ENCODE measurements at regions of chr11 and their contacts with region 1.

Region 1: DNA sequence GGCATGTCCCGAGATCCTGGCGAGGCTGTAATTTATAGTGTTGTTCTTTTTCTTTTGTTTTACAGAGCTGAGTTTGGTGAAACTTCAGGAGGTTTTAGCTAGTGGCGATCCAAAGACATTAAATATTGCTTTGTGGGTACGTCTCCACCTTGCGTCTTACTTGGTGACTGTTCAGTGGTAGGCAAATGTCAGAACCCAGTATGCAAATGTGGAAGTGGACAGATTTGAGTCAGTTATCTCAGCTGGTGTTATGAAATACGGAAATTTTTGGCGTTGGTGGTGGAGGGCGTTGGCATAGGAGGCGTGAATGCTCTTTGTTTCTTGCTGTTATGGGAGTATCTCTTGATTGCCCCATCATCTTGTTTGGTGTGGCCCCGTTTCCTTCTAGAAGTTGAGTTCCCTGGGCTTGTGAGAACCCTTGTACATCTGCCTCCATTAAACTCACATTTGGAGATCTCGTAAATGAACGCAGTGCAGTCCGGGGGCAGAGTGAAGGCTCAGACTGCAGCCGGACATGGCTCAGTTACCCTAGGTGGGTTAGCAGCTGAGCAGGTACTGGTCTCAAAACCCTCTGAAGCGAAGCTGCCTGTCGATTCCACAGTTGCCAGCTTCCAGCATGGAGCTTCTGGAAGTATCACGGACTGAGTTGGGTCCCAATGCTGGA is 39.9 kb downstream of the PTPRJ start:
- DNase-seq: peak; percentile 38
- H3K4me3 Mint-ChIP-seq: peak overlapping the region; percentile 46
- H3K27ac Mint-ChIP-seq: peak overlapping the region; percentile 90
- H3K4me1 Mint-ChIP-seq: peaks cover 79% of the 10 kb centered on the region
- H3K27me3 Mint-ChIP-seq: no peaks in the 10 kb centered on the region

Region 2: DNA sequence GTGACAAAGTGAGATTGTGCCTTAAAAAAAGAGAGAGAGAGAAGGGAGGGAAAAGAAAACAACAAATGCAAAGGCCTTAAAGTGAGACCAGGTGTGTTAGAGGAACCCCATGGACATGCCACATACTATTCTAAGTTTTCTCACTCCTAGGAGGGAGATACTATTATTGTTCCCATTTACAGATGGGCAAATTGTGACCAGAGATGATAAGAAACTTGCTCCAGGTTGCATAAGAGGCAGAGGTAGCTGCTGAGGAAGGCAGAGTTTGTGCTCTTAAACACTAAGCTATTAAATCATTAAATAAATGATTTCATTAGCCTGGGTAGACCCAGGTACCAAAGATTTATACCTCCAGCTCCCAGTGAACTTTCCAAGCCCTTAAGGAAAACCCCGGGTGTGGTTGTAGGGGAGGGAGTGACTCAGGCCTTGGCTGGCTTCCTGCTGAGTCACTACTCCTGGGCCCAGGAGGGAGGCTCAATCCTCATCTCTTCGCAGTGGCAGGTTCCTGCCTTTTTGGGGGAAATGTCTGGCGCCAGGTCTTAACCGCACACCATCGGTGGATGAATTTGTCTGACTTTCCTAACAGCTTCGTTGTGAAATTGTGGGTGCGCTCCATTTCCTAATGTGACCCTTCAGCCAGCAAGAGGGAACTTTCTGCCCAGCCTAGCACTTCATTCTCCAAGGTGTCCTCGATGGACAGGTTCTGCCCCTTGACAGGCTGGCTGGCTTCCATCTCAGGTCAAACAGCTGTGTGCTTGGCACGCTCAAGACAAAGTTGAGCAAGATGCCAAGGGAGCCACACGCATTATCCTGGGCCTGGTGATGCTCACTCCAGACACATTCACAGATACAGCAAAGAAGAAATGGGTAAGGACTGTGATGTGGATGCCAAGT is 73.3 kb before region 1 on chr11:
- intact Hi-C with region 1: no loop called
- DNase-seq: peak; percentile 26
- H3K4me3 Mint-ChIP-seq: no peak overlapping the region
- H3K27ac Mint-ChIP-seq: peak overlapping the region; percentile 74
- H3K4me1 Mint-ChIP-seq: peaks cover 57% of the 10 kb centered on the region
- H3K27me3 Mint-ChIP-seq: no peaks in the 10 kb centered on the region

Region 3: DNA sequence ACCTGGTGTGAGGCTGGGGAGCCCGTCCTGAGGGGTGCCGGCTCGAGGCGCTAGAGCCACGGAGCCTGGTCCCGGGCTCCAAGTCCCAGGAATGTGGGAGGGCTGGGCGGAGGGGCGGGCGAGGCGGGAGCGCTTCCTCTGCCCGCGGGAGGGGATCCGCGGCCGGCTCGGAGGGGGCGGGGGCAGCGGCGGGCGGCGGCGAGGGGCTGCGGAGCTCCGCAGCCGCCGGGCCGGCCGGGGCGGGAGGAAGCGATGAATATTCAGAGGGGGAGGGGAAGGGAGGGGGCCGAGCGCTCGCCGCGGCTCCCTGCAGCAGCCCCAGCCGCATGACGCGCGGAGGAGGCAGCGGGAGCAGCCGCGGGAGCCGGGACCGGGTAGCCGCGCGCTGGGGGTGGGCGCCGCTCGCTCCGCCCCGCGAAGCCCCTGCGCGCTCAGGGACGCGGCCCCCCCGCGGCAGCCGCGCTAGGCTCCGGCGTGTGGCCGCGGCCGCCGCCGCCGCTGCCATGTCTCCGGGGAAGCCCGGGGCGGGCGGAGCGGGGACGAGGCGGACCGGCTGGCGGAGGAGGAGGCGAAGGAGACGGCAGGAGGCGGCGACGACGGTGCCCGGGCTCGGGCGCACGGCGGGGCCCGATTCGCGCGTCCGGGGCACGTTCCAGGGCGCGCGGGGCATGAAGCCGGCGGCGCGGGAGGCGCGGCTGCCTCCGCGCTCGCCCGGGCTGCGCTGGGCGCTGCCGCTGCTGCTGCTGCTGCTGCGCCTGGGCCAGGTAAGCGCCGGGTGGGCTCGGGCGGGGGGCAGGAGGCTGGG is 39.8 kb before region 1 on chr11 and contains the start of gene PTPRJ:
- intact Hi-C with region 1: loop called (anchors 1 kb)
- DNase-seq: peak; percentile 60
- H3K4me3 Mint-ChIP-seq: peak within 1 kb of the TSS; percentile 92
- H3K27ac Mint-ChIP-seq: peak within 1 kb of the TSS; percentile 54
- H3K4me1 Mint-ChIP-seq: peaks cover 26% of the 10 kb centered on the region
- H3K27me3 Mint-ChIP-seq: peaks cover 12% of the 10 kb centered on the region
- total RNA-seq, gene PTPRJ: 69.6 and 70.3 TPM in 2 replicates

Region 4: GRCh38 chr11:48008951-48009270 is 11.3 kb before region 1 on chr11:
- intact Hi-C with region 1: loop called (anchors 1 kb)
- DNase-seq: peak; percentile 64
- H3K4me3 Mint-ChIP-seq: peak overlapping the region; percentile 75
- H3K27ac Mint-ChIP-seq: peak overlapping the region; percentile 98
- H3K4me1 Mint-ChIP-seq: peaks cover 89% of the 10 kb centered on the region
- H3K27me3 Mint-ChIP-seq: no peaks in the 10 kb centered on the region

Region 5: GRCh38 chr11:48034926-48035871 is 15.0 kb after region 1 on chr11:
- intact Hi-C with region 1: loop called (anchors 2 kb)
- DNase-seq: no peak
- H3K4me3 Mint-ChIP-seq: peak overlapping the region; percentile 50
- H3K27ac Mint-ChIP-seq: peak overlapping the region; percentile 59
- H3K4me1 Mint-ChIP-seq: peaks cover 75% of the 10 kb centered on the region
- H3K27me3 Mint-ChIP-seq: no peaks in the 10 kb centered on the region